A673 (cell line): ENCODE measurements at regions of chr17 and their contacts with region 1.

Region 1: GRCh38 chr17:55452139-55452790 is 30.6 kb upstream of the MMD start:
- DNase-seq: peak; percentile 63
- H3K4me3 ChIP-seq: no peak overlapping the region
- H3K27ac ChIP-seq: no peak overlapping the region
- H3K4me1 ChIP-seq: peaks cover 62% of the 10 kb centered on the region
- H3K27me3 ChIP-seq: no peaks in the 10 kb centered on the region
- CTCF ChIP-seq: no peak

Region 2: DNA sequence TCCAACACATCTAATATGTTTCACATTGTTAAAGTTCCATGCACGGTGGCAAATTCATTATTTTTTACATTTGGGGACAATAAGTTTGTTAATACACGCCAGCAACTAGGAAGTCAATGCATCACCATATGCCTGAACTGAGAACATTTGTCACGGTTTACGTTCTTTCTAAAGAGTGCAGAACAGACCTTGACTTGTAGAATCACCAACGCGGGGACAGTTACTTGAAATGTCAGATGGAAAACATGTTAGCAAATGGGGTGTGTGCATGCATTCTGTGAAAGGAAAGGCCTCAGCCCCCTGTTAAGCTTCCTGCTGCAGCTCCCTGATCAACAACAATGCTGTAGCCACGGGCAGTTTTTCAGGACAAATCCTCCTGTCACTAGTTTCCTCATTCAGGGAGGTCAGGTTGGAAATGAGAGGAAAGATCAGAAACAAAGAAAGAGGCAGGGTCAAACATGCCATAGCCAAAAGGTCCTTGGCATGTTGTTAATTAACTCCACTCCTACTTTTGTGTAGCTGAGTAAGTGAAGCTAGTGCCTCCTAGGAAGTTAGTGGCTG is 40.6 kb after region 1 on chr17:
- CTCF ChIA-PET with region 1: interaction called, 10 read pairs
- POLR2A ChIA-PET with region 1: no interaction called
- intact Hi-C with region 1: no loop called
- DNase-seq: no peak
- H3K4me3 ChIP-seq: no peak overlapping the region
- H3K27ac ChIP-seq: no peak overlapping the region
- H3K4me1 ChIP-seq: peaks cover 8% of the 10 kb centered on the region
- H3K27me3 ChIP-seq: no peaks in the 10 kb centered on the region
- CTCF ChIP-seq: no peak